HCT116 (cell line): ENCODE measurements at regions of chr3 and their contacts with region 1.

Region 1: DNA sequence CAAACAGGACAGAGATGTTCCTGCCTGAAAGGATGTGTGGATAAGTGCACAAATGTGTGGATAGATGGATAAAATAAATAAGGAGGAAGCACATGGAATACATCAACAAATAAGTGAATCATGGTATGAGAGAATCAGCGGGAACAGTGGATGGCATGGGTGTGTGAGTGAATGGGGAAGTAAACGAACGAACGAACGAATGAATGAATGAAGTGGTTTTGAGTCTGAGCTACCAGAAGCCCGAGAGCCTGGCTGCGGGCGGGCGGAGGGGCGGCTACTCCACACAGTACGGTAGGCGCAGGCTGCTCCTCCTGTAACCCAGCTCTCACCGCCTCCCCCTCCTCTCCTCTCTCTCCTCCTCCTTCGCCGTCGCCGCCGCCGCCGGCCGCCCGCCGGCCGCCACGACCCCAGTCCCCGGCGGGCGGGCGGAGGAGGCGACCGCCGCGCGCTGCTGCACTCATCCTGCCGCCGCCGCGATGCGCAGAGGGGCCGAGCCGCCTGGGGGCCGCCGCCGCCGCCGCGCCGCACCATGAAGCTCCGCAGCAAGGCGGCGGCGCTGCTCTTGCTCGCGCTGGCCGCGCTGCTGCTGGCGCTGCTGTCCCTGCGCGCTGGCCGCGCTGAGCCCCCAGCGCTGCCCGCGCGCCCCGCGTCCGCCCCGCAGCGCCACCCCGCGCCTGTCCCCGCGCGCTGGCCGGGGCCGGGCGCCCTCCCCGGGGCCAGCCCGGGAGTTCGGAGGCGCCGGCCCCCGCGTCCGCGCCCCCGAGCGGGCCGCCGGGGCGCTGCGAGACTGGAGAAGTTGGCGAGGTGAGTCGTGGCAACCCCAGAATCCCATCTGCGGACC is at the start of gene GXYLT2:
- DNase-seq: no peak
- ATAC-seq: peak; percentile 91
- H3K4me3 ChIP-seq: peak within 1 kb of the TSS; percentile 50 to 70
- H3K27ac ChIP-seq: peak within 1 kb of the TSS; percentile 50; the same call in 1 of the 2 replicates
- H3K4me1 ChIP-seq: peaks cover 35 to 40% of the 10 kb centered on the region in 2 experiments
- H3K27me3 ChIP-seq: no peaks in the 10 kb centered on the region
- CTCF ChIP-seq: no peak
- POLR2A ChIP-seq: no peak
- RAD21 ChIP-seq: no peak
- total RNA-seq, gene GXYLT2: 5.6 TPM

Region 2: GRCh38 chr3:72591522-72592421 is 296.2 kb before region 1 on chr3:
- CTCF ChIA-PET with region 1: no interaction called
- POLR2A ChIA-PET with region 1: no interaction called
- RAD21 ChIA-PET with region 1: no interaction called
- intact Hi-C with region 1: loop called (anchors 10 kb)
- DNase-seq: no peak
- ATAC-seq: peak; percentile 66
- H3K4me3 ChIP-seq: no peak overlapping the region
- H3K27ac ChIP-seq: no peak overlapping the region
- H3K4me1 ChIP-seq: peaks cover 14 to 18% of the 10 kb centered on the region in 2 experiments
- H3K27me3 ChIP-seq: no peaks in the 10 kb centered on the region
- CTCF ChIP-seq: no peak
- POLR2A ChIP-seq: no peak
- RAD21 ChIP-seq: 0 out of 2 replicates have a peak, but pooled peaks have one; percentile 13